Activated CD4-positive, alpha-beta T cell treated with anti-CD3 and anti-CD28 coated beads for 36 hours (primary cell): ENCODE measurements at regions of chr11 and their contacts with region 1.

Region 1: GRCh38 chr11:74255741-74256369 is 55.6 kb downstream of the P4HA3 start:
- DNase-seq: peak; percentile 70
- ATAC-seq: peak; percentile 84
- H3K4me3 Mint-ChIP-seq: no peak overlapping the region
- H3K27ac Mint-ChIP-seq: no peak overlapping the region
- H3K4me1 Mint-ChIP-seq: no peaks in the 10 kb centered on the region
- H3K27me3 Mint-ChIP-seq: no peaks in the 10 kb centered on the region

Region 2: GRCh38 chr11:73876424-73877300 is 379.2 kb before region 1 on chr11 and contains the starts of genes COA4 and PAAF1:
- CTCF ChIA-PET with region 1: no interaction called
- POLR2A ChIA-PET with region 1: no interaction called
- intact Hi-C with region 1: no loop called
- DNase-seq: peak; percentile 97
- ATAC-seq: peak; percentile 95
- H3K4me3 Mint-ChIP-seq: peak within 1 kb of the TSS; percentile 93
- H3K27ac Mint-ChIP-seq: peak within 1 kb of the TSS; percentile 100
- H3K4me1 Mint-ChIP-seq: peaks cover 32% of the 10 kb centered on the region
- H3K27me3 Mint-ChIP-seq: no peaks in the 10 kb centered on the region
- total RNA-seq, gene COA4: 103 to 112 TPM
- total RNA-seq, gene PAAF1: 34.2 to 34.8 TPM

Region 3: GRCh38 chr11:74195828-74196227 is 60.0 kb before region 1 on chr11:
- CTCF ChIA-PET with region 1: no interaction called
- POLR2A ChIA-PET with region 1: no interaction called
- intact Hi-C with region 1: no loop called
- DNase-seq: no peak
- ATAC-seq: no peak
- H3K4me3 Mint-ChIP-seq: no peak overlapping the region
- H3K27ac Mint-ChIP-seq: no peak overlapping the region
- H3K4me1 Mint-ChIP-seq: no peaks in the 10 kb centered on the region
- H3K27me3 Mint-ChIP-seq: no peaks in the 10 kb centered on the region

Region 4: DNA sequence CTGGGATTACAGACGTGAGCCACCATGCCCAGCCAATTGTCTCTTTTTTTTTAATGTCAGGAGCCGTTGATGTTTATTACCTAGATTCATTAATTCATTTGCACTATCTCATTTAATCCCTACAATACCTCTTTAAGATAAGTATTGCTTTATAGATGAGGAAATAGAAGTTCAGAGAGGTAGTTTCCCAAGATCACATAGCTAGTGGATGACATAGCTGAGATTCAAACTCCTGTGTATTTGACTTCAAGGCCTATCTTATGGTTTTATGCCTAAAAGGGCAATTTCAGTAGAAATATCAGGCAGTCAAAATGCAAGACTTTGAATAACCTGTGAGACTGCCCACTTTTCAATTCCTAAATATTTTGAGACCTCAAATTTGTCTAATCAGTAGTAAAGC is 18.3 kb before region 1 on chr11:
- CTCF ChIA-PET with region 1: interaction called, 13 read pairs
- POLR2A ChIA-PET with region 1: no interaction called
- intact Hi-C with region 1: no loop called
- DNase-seq: no peak
- ATAC-seq: no peak
- H3K4me3 Mint-ChIP-seq: no peak overlapping the region
- H3K27ac Mint-ChIP-seq: no peak overlapping the region
- H3K4me1 Mint-ChIP-seq: peaks cover 25% of the 10 kb centered on the region
- H3K27me3 Mint-ChIP-seq: no peaks in the 10 kb centered on the region

Region 5: GRCh38 chr11:74269161-74269811 is 13.4 kb after region 1 on chr11:
- CTCF ChIA-PET with region 1: interaction called, 19 read pairs
- POLR2A ChIA-PET with region 1: no interaction called
- intact Hi-C with region 1: no loop called
- DNase-seq: peak; percentile 54
- ATAC-seq: peak; percentile 74
- H3K4me3 Mint-ChIP-seq: no peak overlapping the region
- H3K27ac Mint-ChIP-seq: no peak overlapping the region
- H3K4me1 Mint-ChIP-seq: peaks cover 19% of the 10 kb centered on the region
- H3K27me3 Mint-ChIP-seq: peaks cover 2% of the 10 kb centered on the region

Region 6: GRCh38 chr11:74321487-74322188 is 65.8 kb after region 1 on chr11:
- CTCF ChIA-PET with region 1: interaction called, 31 read pairs
- POLR2A ChIA-PET with region 1: interaction called, 4 read pairs
- intact Hi-C with region 1: loop called (anchors 1 kb)
- DNase-seq: peak; percentile 54
- ATAC-seq: peak; percentile 33
- H3K4me3 Mint-ChIP-seq: no peak overlapping the region
- H3K27ac Mint-ChIP-seq: no peak overlapping the region
- H3K4me1 Mint-ChIP-seq: no peaks in the 10 kb centered on the region
- H3K27me3 Mint-ChIP-seq: no peaks in the 10 kb centered on the region

Region 7: GRCh38 chr11:74570266-74571061 is 314.6 kb after region 1 on chr11:
- CTCF ChIA-PET with region 1: interaction called, 7 read pairs
- POLR2A ChIA-PET with region 1: no interaction called
- intact Hi-C with region 1: loop called in 1 of 2 experiments (anchors 5 kb)
- DNase-seq: peak; percentile 51
- ATAC-seq: peak; percentile 55
- H3K4me3 Mint-ChIP-seq: no peak overlapping the region
- H3K27ac Mint-ChIP-seq: no peak overlapping the region
- H3K4me1 Mint-ChIP-seq: no peaks in the 10 kb centered on the region
- H3K27me3 Mint-ChIP-seq: no peaks in the 10 kb centered on the region